Motor neuron (in vitro differentiated cells): ENCODE measurements at regions of chr5 and their contacts with region 1.

Region 1: GRCh38 chr5:72611118-72611730 is 104.0 kb upstream of the ZNF366 start:
- ATAC-seq: peak; percentile 97 to 100 (median 98)
- H3K4me3 ChIP-seq: peak overlapping the region in 1 of 5 donors; percentile 0
- H3K27ac ChIP-seq: no peak overlapping the region
- H3K4me1 ChIP-seq: peaks cover 8 to 17% of the 10 kb centered on the region in 2 donors

Region 2: DNA sequence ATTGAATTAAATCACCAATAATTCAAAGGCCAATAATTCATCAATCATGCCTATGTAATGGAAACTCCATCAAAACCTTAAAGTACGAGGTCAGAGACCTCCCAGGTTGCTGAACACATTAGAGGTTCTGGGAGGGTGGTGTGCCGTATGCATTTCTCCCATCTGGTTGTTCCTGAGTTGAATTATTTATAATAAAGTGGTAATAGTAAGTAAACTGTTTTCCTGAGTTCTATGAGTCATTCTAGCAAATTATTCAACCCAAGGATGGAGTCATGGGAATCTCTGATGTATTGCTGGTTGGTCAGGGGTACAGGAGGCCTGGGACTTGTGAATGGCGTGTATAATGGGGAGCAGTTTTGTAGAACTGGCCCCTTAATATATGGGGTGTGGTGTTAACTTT is 700.5 kb before region 1 on chr5:
- in situ Hi-C with region 1: no loop called
- ATAC-seq: peak in 2 of 8 experiments; percentile 66 to 79
- H3K4me3 ChIP-seq: no peak overlapping the region
- H3K27ac ChIP-seq: no peak overlapping the region
- H3K4me1 ChIP-seq: peaks cover 18 to 21% of the 10 kb centered on the region in 2 donors

Region 3: GRCh38 chr5:72816311-72817145 is 205.3 kb after region 1 on chr5 and contains the start of gene TNPO1:
- in situ Hi-C with region 1: loop called in 1 of 9 experiments (anchors 10 kb)
- ATAC-seq: peak; percentile 88 to 91 (median 90)
- H3K4me3 ChIP-seq: peak within 1 kb of the TSS; percentile 59 to 91 (median 76)
- H3K27ac ChIP-seq: peak within 1 kb of the TSS; percentile 92 to 97
- H3K4me1 ChIP-seq: peaks cover 5 to 12% of the 10 kb centered on the region in 2 donors
- total RNA-seq, gene TNPO1: 89.3 to 122 (median 100.0) TPM